ENCODE measurements at regions of chr16 and their contacts with region 1.

Region 1: DNA sequence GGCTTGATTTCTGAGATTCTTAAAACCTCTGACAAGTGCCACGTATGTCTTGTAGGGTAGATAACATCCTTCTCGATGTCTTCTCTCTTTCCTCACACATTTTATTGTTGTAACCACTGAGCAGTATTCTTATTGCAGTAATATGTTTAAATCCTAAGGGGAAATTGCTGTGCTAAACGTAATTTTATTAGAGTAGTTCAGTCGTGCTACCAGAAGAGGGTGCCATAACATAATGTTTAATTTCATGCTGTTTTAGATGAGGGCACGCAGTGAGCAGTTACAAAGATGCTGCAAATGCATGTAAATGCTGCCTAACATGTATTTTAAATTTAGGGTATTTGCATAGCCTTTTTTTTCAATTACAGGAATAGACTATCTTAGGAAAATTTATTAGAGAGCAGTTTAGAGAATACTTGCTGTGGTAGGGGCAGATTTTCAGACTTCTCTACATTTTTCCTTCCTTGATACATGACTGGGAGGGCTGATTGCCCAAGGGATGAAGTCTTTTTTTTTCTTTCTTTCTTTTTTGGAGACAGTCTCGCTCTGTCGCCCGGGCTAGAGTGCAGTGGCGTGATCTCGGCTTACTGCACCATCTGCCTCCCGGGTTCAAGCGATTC is 51.7 kb downstream of the GAN start:
- DNase-seq: peak; percentile 70
- H3K4me3 ChIP-seq: no peak overlapping the region
- H3K27ac ChIP-seq: no peak overlapping the region
- H3K4me1 ChIP-seq: no peaks in the 10 kb centered on the region
- H3K27me3 ChIP-seq: no peaks in the 10 kb centered on the region

Region 2: DNA sequence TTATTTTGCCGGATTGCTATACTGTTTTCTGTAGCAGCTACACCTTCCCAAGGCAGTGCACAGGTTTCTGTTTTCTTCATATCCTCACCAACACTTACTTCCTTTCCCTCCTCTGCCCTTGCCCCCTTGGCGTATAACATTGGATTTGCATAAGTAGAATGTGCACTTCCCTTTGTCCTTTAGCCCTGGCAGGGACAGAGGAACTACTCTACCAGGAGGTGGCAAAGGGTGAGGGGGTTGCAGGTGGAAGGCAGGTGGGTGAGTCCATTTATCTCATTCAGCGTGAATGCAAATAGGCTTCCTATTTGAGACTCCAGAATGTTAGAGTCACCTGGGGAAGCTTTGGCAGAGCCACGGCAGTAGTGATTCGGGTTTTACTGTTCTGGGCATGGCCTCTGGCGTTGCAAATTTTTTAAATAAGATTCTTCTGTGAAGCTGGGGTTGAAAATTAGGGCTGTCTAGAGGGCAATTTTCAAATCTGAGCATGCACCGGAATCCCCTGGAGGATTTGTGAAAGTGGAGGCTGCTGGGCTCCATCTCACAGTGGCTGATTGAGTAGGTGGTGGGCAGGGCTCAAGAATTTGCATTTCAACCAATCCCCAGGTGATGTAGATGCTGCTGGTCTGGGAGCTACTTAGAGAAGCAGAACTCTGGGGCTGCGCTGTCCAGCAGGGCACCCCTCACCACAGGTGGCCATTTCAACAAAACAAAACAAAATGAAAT is 497.4 kb after region 1 on chr16:
- in situ Hi-C with region 1: loop called (anchors 10 kb)
- DNase-seq: no peak
- H3K4me3 ChIP-seq: no peak overlapping the region
- H3K27ac ChIP-seq: no peak overlapping the region
- H3K4me1 ChIP-seq: no peaks in the 10 kb centered on the region
- H3K27me3 ChIP-seq: peaks cover 3% of the 10 kb centered on the region